ENCODE measurements at regions of chr4 and their contacts with region 1.

Region 1: DNA sequence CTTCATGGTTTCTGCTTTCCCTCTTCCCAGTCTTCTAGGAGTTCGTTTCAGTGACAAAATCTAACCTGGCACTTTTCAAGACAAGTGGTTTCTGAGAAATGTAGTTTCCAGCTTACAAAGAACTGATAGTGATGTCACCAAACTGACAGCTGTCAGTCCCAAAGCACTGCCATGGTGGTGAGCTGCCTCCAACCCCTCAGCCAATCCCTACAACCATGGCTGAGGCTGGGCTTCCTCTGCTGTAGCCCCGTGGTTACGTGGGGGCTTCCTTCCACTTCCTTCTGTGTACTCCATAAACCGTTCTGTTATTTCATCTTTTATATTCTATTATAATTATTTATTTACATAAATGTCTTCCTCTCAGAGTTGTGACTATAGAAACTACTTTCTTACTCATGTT is 198.6 kb upstream of the AGA start:
- DNase-seq: no peak
- ATAC-seq: no peak
- H3K4me3 ChIP-seq: no peak overlapping the region
- H3K27ac ChIP-seq: no peak overlapping the region
- H3K4me1 ChIP-seq: no peaks in the 10 kb centered on the region
- H3K27me3 ChIP-seq: no peaks in the 10 kb centered on the region
- CTCF ChIP-seq: no peak

Region 2: DNA sequence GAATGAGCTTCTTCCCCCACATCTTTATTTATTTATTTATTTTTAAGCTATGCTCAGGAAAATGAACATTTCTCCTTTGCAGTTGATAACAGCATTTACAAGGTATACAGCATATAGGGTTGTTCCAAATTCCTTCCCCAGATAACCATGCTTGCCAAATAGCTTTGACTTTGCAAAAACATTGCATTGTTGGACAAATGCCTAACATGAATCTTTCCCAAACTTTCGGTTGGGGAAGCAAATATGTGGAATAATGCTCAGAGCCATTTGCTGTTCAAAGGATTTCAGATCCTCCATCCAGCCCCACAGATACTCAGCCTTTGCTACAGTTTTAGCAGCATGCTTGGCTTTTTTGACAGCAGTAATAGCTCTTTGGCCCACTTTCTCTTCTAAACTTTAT is 71.4 kb before region 1 on chr4:
- CTCF ChIA-PET with region 1: no interaction called
- POLR2A ChIA-PET with region 1: no interaction called
- intact Hi-C with region 1: loop called (anchors 10 kb)
- DNase-seq: no peak
- ATAC-seq: no peak
- H3K4me3 ChIP-seq: no peak overlapping the region
- H3K27ac ChIP-seq: no peak overlapping the region
- H3K4me1 ChIP-seq: peaks cover 13% of the 10 kb centered on the region
- H3K27me3 ChIP-seq: no peaks in the 10 kb centered on the region
- CTCF ChIP-seq: no peak

Measured in PC-3 (cell line).